A549 (cell line): ENCODE measurements at regions of chr2 and their contacts with region 1.

Region 1: DNA sequence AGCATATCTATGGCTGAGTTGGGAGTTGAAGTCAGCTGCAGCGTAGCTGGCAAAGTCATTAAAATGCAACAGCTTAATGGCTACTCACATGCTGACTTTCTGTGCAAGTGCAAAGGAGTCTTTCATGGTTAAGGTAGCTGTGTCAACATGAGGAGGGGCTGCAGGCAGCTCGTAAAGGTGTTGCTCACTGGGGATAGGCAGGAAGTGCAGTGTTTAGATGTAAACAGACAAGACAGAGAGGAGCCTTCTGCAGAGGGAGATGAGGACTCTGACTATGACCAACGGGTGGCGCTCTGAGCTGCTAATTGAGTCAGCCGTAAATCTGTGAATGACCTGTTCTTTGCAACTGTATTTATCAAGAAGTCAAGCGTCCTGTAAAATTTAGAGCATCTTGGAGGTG is 22.3 kb upstream of the CAVIN2 start:
- DNase-seq: peak in 1 of 2 experiments; percentile 75
- ATAC-seq: peak in 1 of 2 experiments; percentile 41; a peak in 2 of 6 replicates
- H3K4me3 ChIP-seq: no peak overlapping the region
- H3K27ac ChIP-seq: peak overlapping the region; percentile 87 to 91
- H3K4me1 ChIP-seq: peaks cover 57% of the 10 kb centered on the region
- CTCF ChIP-seq: no peak
- EP300 ChIP-seq: no peak
- POLR2A ChIP-seq: no peak
- RAD21 ChIP-seq: peak in 1 of 2 experiments; percentile 71; a peak in 2 of 5 replicates

Region 2: DNA sequence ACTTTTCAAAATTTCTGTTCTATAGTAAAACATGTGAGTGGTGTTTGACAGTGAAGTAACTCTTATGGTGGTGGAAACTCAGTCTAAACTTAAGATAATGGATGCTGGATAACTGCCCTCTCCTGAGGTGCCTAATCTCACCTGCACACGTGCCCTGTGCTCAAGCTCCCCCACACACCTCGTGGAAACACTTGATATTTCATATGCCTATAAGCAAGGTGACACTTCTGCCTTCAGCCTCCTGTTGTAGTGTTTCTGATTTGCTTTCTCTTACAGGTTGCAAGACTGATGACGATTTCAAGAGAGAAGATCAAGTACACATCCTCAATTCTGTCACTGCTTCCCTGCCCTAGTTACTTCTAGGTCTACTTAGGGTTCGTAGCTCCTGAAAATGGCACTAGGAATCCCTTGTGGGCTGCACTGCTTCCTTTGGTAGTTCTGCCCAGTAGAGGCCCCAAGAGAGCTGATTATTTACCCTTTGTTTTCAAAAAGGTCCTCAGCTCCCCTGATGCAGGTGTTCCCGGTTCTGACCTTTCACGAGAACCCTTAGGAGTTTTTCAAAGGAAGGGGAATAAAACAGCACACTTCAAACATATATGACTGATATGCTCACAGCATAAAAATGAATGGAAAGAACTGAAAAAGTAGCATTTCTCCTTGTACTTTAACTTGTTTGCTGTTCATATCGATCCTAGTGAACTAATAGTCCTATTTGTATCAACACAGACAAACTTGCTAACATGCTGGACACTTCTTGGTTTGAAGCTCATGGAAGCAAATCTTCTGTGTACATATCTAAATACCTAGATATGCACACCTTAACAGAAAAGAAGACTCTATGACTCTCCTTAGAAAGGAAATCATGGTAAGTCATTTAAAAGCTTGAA is 29.0 kb before region 1 on chr2:
- CTCF ChIA-PET with region 1: no interaction called
- POLR2A ChIA-PET with region 1: no interaction called
- DNase-seq: no peak
- ATAC-seq: peak in 1 of 2 experiments; percentile 55; a peak in 2 of 6 replicates
- H3K4me3 ChIP-seq: no peak overlapping the region
- H3K27ac ChIP-seq: 0 out of 6 replicates have a peak overlapping the region, but pooled peaks of 1 of the 2 experiments have one; percentile 20
- H3K4me1 ChIP-seq: peaks cover 20% of the 10 kb centered on the region; the same call in 2 of the 3 replicates
- CTCF ChIP-seq: 0 out of 3 replicates have a peak, but pooled peaks have one; percentile 7
- EP300 ChIP-seq: no peak
- POLR2A ChIP-seq: no peak
- RAD21 ChIP-seq: no peak; a peak in 1 of 5 replicates

Region 3: DNA sequence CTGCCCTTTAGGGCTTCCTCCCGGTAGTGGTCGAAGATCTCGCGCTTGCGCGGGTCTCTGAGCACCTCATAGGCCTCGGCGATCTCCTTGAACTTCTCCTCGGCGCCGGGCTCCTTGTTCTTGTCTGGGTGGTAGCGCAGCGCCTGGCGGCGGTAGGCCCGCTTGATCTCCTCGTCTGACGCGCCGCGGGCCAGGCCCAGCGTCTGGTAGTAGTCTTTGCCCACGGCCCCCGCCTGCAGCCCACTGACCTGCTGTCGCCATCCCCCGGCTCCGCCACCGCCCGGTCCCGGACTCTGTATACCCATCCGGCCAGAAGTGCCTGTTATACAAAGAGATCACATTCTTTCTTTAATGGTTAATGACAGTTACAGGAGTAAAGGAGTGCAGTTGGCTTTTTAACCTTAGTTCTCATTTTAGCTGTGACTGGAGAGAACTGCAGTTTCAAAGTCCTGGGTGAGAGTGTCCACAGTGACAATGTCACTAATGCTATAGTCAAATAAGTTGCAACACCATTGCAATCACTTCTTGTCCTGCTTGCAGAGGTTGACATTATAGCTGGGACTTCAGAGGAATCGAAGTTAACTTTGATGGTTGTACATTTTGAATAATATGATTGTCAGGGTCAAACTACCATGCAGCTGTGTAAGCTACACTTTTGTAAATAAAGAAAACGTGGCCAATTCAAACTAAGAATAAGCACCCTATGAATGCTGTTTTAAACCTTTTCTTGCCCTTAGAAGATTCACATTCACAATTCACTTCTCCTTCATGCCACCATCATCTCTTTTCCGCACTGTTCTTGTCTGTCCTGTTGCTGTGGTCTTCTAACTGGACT is 13.0 kb after region 1 on chr2:
- CTCF ChIA-PET with region 1: interaction called, 11 read pairs
- POLR2A ChIA-PET with region 1: no interaction called
- DNase-seq: no peak
- ATAC-seq: no peak
- H3K4me3 ChIP-seq: no peak overlapping the region
- H3K27ac ChIP-seq: 0 out of 6 replicates have a peak overlapping the region, but pooled peaks of 1 of the 2 experiments have one; percentile 12
- H3K4me1 ChIP-seq: peaks cover 38% of the 10 kb centered on the region
- CTCF ChIP-seq: no peak
- EP300 ChIP-seq: no peak
- POLR2A ChIP-seq: no peak
- RAD21 ChIP-seq: no peak

Region 4: GRCh38 chr2:191907545-191907944 is 38.4 kb after region 1 on chr2:
- CTCF ChIA-PET with region 1: no interaction called
- POLR2A ChIA-PET with region 1: no interaction called
- DNase-seq: no peak
- ATAC-seq: peak; percentile 72 to 76; a peak in 5 of 6 replicates
- H3K4me3 ChIP-seq: no peak overlapping the region
- H3K27ac ChIP-seq: peak overlapping the region in 1 of 2 experiments; percentile 40; a peak in 1 of 6 replicates
- H3K4me1 ChIP-seq: peaks cover 13% of the 10 kb centered on the region
- CTCF ChIP-seq: 0 out of 3 replicates have a peak, but pooled peaks have one; percentile 5
- EP300 ChIP-seq: no peak
- POLR2A ChIP-seq: no peak
- RAD21 ChIP-seq: no peak; a peak in 2 of 5 replicates